ENCODE measurements at regions of chr12 and their contacts with region 1.

Region 1: GRCh38 chr12:54368709-54369583 is 4.7 kb upstream of the GPR84 start:
- DNase-seq: peak; percentile 90 to 94
- H3K4me3 ChIP-seq: peak overlapping the region; percentile 46
- H3K27ac ChIP-seq: peak overlapping the region; percentile 34 to 52
- H3K4me1 ChIP-seq: peaks cover 6 to 41% (median 30%) of the 10 kb centered on the region in 4 donors
- H3K27me3 ChIP-seq: no peaks in the 10 kb centered on the region
- CTCF ChIP-seq: peak; percentile 80 to 86

Region 2: GRCh38 chr12:53974084-53975063 is 394.6 kb before region 1 on chr12 and contains the start of gene HOTAIR:
- intact Hi-C with region 1: loop called (anchors 10 kb)
- DNase-seq: peak in 1 of 2 donors; percentile 81
- H3K4me3 ChIP-seq: peak within 1 kb of the TSS; percentile 75 to 85
- H3K27ac ChIP-seq: peak within 1 kb of the TSS; percentile 93 to 98
- H3K4me1 ChIP-seq: peaks cover 0 to 63% (median 44%) of the 10 kb centered on the region in 4 donors
- H3K27me3 ChIP-seq: no peaks in the 10 kb centered on the region
- CTCF ChIP-seq: no peak

Region 3: GRCh38 chr12:54220092-54220557 is 148.8 kb before region 1 on chr12:
- intact Hi-C with region 1: loop called (anchors 10 kb)
- DNase-seq: peak; percentile 69 to 82
- H3K4me3 ChIP-seq: no peak overlapping the region
- H3K27ac ChIP-seq: no peak overlapping the region
- H3K4me1 ChIP-seq: peaks cover 0 to 31% (median 24%) of the 10 kb centered on the region in 4 donors
- H3K27me3 ChIP-seq: peaks cover 0 to 15% of the 10 kb centered on the region in 2 donors
- CTCF ChIP-seq: peak; percentile 79

Region 4: DNA sequence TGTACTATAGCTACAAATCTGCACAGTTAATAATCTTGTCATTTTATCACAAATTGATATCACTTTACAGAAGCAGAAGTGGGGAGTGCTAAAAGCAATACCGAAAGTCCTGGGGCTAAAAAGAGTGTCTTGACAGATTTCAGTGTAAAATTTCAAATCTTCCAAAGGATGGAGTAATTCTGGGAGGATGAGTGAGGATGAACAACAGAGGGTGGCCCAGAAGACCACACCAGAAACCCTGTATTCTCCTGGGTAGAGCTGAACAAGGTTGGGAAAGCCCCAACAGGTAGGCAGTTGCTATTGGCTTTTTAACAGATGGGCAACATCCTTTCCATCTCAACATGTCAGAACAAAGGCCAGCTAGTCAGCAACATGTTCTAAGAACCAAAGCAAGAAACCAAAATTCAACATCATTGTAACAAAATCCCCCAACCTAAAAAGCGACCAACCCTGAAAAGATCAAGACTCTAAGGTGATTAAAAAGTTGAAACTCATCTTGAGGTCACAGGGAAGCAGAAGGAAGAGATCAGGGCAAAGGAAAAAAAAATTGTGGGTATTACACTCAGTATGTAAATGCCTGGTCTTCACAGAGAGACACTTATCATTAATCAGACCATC is 127.9 kb before region 1 on chr12:
- intact Hi-C with region 1: no loop called
- DNase-seq: no peak
- H3K4me3 ChIP-seq: no peak overlapping the region
- H3K27ac ChIP-seq: no peak overlapping the region
- H3K4me1 ChIP-seq: no peaks in the 10 kb centered on the region
- H3K27me3 ChIP-seq: no peaks in the 10 kb centered on the region
- CTCF ChIP-seq: no peak

Region 5: GRCh38 chr12:54431911-54432814 is 63.2 kb after region 1 on chr12:
- intact Hi-C with region 1: no loop called
- DNase-seq: peak; percentile 87 to 96
- H3K4me3 ChIP-seq: peak overlapping the region; percentile 18 to 34
- H3K27ac ChIP-seq: peak overlapping the region; percentile 93 to 98
- H3K4me1 ChIP-seq: peaks cover 0 to 90% (median 52%) of the 10 kb centered on the region in 4 donors
- H3K27me3 ChIP-seq: no peaks in the 10 kb centered on the region
- CTCF ChIP-seq: no peak

Measured in tibial artery (tissue), 4 donors.